Activated CD4-positive, alpha-beta T cell treated with anti-CD3 and anti-CD28 coated beads, Interleukin-2, amount 10 ng/mL, durations not matched to agents 24 days and 14 days (primary cell): ENCODE measurements at regions of chr1 and their contacts with region 1.

Region 1: DNA sequence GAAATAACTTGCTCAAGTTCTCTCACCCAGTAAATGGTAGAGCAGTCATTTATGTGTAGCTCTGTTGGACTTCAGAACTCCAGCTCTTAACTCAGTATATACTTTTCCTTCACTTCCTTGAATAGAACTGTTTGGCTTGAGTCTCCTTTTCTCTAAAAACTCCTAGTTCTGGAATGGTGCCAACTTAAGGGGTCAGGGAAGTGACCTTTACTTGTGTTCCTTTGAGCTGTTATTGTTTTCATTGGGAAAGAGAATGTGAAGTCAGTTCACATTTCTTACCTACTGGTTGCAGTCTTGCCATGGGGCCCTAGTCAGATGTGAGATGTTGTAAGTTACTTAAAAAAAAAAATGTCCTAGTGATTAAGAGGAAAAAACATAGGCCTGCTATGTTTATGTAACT is 77.0 kb upstream of the MACF1 start:
- DNase-seq: no peak
- H3K4me3 Mint-ChIP-seq: no peak overlapping the region
- H3K27ac Mint-ChIP-seq: no peak overlapping the region
- H3K4me1 Mint-ChIP-seq: peaks cover 7% of the 10 kb centered on the region
- H3K27me3 Mint-ChIP-seq: peaks cover 2% of the 10 kb centered on the region

Region 2: GRCh38 chr1:39145331-39145965 is 17.9 kb after region 1 on chr1:
- intact Hi-C with region 1: no loop called
- DNase-seq: no peak
- H3K4me3 Mint-ChIP-seq: no peak overlapping the region
- H3K27ac Mint-ChIP-seq: no peak overlapping the region
- H3K4me1 Mint-ChIP-seq: no peaks in the 10 kb centered on the region
- H3K27me3 Mint-ChIP-seq: peaks cover 27% of the 10 kb centered on the region

Region 3: GRCh38 chr1:39159224-39160036 is 31.9 kb after region 1 on chr1:
- intact Hi-C with region 1: loop called (anchors 2 kb)
- DNase-seq: no peak
- H3K4me3 Mint-ChIP-seq: no peak overlapping the region
- H3K27ac Mint-ChIP-seq: no peak overlapping the region
- H3K4me1 Mint-ChIP-seq: peaks cover 9% of the 10 kb centered on the region
- H3K27me3 Mint-ChIP-seq: peaks cover 19% of the 10 kb centered on the region